AG04450 (cell line): ENCODE measurements at regions of chr6 and their contacts with region 1.

Region 1: GRCh38 chr6:31580807-31581433 is 1.3 kb downstream of the LTB start:
- DNase-seq: peak; percentile 42
- H3K4me3 ChIP-seq: peak overlapping the region; percentile 86
- H3K27ac ChIP-seq: peak overlapping the region; percentile 57
- H3K27me3 ChIP-seq: peaks cover 5% of the 10 kb centered on the region
- CTCF ChIP-seq: peak; percentile 87

Region 2: DNA sequence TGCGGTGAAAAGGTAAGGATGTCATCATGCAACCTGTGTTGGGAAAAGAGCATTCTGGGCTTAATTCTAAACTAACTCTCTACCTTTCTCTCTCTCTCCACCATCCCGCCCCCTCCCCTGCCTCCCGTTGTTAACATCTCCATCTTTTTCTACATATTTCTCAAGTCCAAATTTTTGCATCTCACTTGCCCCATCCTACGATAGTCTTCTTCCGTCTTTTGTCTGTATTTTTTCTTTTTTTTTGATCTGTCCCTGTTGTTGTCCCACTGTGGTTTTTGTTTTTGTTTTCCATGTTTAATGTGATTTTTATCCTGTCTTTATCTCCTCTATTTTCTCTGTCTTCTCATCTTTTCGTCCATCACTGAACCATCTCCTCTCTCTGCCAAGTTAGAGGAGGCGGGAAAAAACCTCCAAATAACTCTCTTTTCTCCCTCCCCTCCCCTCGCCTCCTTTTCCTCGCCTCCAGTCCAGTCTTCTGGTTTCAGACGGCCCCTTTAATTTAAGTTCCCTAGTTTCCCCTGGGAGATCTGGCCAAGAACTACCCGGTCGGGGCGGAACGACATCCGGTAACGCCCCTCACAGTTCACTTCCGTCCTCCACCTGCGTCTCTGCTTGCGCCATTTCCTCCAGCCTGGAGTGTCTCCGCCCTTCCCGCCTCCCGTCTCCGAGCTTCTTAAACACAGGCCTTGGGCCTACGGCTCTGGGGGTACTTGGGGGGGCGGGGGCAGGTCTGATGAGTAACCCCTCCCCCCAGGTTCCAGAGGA is 33.8 kb before region 1 on chr6 and contains the start of gene NFKBIL1:
- CTCF ChIA-PET with region 1: interaction called, 31 read pairs
- POLR2A ChIA-PET with region 1: no interaction called
- DNase-seq: peak; percentile 94
- H3K4me3 ChIP-seq: peak within 1 kb of the TSS; percentile 75
- H3K27ac ChIP-seq: peak within 1 kb of the TSS; percentile 52
- H3K27me3 ChIP-seq: no peaks in the 10 kb centered on the region
- CTCF ChIP-seq: no peak
- polyA plus RNA-seq, gene NFKBIL1: 5.1 and 5.4 TPM in 2 replicates

Region 3: GRCh38 chr6:31559958-31560696 is 20.8 kb before region 1 on chr6:
- CTCF ChIA-PET with region 1: interaction called, 20 read pairs
- POLR2A ChIA-PET with region 1: no interaction called
- DNase-seq: no peak
- H3K4me3 ChIP-seq: no peak overlapping the region
- H3K27ac ChIP-seq: peak overlapping the region; percentile 68
- H3K27me3 ChIP-seq: peaks cover under 1% of the 10 kb centered on the region
- CTCF ChIP-seq: no peak

Region 4: GRCh38 chr6:31568537-31568961 is 12.4 kb before region 1 on chr6:
- CTCF ChIA-PET with region 1: interaction called, 20 read pairs
- POLR2A ChIA-PET with region 1: no interaction called
- DNase-seq: no peak
- H3K4me3 ChIP-seq: no peak overlapping the region
- H3K27ac ChIP-seq: no peak overlapping the region
- H3K27me3 ChIP-seq: peaks cover 21% of the 10 kb centered on the region
- CTCF ChIP-seq: no peak

Region 5: DNA sequence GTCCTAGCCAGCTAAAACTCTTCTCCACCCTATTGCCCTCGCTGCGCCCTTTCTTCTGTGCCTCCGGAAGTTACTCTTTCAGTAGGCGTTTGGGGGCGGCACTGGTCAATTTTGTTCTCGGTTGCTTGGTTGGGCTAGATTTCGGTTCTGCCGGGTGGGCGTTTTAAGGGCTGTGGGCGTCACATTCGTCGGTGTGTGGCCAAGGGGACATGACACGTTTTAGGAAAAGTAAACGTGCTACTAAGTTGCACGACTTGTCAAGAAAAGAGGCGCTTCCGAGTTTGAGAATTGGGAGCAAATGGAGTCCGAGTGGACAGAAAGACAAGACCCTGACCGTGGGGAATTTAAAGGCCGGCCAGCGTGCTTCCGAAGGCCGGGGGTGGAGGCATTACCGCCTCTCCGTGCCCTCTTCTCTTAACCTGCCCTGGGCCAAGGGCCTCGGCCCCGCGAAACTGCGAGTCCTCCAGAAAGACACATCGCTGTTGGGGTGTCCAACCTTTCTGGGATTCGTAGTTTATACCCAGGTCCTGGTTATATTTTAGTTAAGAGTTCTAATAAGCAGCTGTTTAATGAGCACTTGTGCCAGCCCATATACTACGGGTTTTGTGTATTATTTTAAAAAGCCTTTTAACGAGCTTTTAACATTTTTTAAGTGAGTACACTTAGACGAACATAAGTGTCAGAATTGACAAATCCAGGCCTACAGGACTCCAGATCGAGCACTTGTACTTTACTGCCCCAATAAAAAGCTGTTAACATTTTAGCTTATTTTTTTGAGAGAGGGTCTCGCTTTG is 72.2 kb after region 1 on chr6:
- CTCF ChIA-PET with region 1: no interaction called
- POLR2A ChIA-PET with region 1: no interaction called
- DNase-seq: no peak
- H3K4me3 ChIP-seq: peak overlapping the region; percentile 88
- H3K27ac ChIP-seq: peak overlapping the region; percentile 98
- H3K27me3 ChIP-seq: no peaks in the 10 kb centered on the region
- CTCF ChIP-seq: no peak

Region 6: DNA sequence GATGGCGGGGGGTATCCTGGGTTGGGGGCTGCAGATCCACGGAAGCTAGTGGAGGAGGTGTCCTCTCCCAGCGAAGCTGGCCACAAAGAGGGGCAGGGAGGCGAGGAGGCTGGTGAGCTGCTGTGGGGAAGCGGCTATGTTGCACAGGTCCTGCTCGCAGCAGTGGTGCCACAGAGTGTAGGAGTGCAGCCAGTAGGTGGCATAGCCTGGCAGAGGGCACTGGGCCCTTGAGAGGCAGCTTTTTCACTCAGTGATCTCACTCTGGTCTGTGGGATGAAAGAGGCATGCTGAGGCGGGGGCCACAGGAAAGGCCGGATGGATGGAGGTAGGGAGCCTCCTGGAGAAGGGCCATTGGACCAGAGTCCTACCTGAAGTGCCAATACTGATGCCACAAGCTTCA is 131.4 kb after region 1 on chr6:
- CTCF ChIA-PET with region 1: no interaction called
- POLR2A ChIA-PET with region 1: no interaction called
- DNase-seq: no peak
- H3K4me3 ChIP-seq: no peak overlapping the region
- H3K27ac ChIP-seq: no peak overlapping the region
- H3K27me3 ChIP-seq: peaks cover 33% of the 10 kb centered on the region
- CTCF ChIP-seq: no peak

Region 7: DNA sequence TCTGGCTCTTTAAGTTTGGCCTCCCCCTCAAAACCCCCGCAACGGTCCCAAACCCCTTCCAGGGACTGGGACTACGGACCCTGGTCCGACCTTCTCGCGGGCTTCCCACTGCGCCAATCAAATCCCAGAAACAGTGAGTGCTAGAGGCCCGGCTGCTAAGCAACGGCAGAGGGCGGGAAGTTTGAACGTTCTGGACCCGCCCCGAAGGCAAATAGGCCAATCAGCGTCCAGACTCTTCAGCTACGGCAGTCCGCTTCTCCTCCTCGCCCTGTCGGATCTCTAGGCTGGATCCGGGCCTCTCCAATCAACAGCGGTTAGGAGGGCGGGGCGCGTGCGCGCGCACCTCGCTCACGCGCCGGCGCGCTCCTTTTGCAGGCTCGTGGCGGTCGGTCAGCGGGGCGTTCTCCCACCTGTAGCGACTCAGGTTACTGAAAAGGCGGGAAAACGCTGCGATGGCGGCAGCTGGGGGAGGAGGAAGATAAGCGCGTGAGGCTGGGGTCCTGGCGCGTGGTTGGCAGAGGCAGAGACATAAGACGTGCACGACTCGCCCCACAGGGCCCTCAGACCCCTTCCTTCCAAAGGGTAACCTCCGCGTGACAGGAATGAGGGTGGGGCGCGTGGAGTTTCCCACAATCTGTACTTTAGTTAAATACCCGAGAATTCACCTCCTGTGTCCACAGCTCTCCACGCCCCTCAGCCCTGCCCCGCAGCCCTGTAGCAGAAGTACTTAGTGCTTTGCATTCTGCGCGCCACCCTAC is 158.9 kb after region 1 on chr6 and contains the start of gene MSH5:
- CTCF ChIA-PET with region 1: no interaction called
- POLR2A ChIA-PET with region 1: no interaction called
- DNase-seq: peak; percentile 98
- H3K4me3 ChIP-seq: peak within 1 kb of the TSS; percentile 90
- H3K27ac ChIP-seq: no peak within 1 kb of the TSS
- H3K27me3 ChIP-seq: no peaks in the 10 kb centered on the region
- CTCF ChIP-seq: no peak
- polyA plus RNA-seq, gene MSH5: 6.4 and 7.2 TPM in 2 replicates